CD14-positive monocyte (primary cell): ENCODE measurements at regions of chr19 and their contacts with region 1.

Region 1: DNA sequence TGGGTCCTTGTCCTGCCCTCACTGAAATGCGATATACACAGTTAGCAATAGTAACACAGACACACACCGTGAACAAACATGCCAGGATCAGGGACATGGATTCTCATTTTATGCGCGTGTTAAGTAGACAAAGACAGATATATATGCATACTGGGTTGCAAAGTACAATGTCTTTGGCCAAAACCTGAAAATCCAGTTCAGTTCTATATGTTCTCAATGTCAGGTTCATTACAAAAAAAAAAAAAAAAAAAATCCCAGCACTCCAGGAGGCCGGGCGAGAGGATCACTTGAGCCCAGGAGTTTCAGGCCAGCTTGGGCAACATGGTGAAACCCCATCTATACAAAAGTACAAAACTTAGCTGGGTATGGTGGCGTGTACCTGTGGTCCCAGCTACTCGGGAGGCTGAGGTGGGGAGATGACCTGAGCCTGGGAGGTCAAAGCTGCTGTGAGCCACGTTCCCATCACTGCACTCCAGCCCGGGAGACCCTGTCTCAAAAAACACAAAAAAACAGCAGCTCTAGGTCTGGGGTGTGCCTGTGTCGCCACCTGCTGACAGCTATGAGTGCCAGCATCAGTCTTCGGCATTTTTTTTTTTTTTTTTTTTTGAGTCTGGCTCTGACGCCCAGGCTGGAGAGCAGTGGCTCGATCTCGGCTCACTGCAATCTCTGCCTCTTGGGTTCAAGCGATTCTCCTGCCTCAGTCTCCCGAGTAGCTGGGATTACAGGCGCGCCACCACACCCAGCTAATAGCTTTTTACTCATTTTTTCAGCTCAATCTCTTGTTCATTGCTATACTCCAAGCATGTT is 10.3 kb downstream of the AP2S1 start:
- DNase-seq: peak; percentile 47 to 70 (median 61)
- H3K4me3 ChIP-seq: no peak overlapping the region
- H3K4me3 Mint-ChIP-seq: no peak overlapping the region
- H3K27ac ChIP-seq: no peak overlapping the region
- H3K27ac Mint-ChIP-seq: peak overlapping the region in 3 of 7 donors; percentile 21 to 65 (median 52)
- H3K4me1 ChIP-seq: no peaks in the 10 kb centered on the region
- H3K4me1 Mint-ChIP-seq: peaks cover 5% of the 10 kb centered on the region
- H3K27me3 ChIP-seq: no peaks in the 10 kb centered on the region
- H3K27me3 Mint-ChIP-seq: no peaks in the 10 kb centered on the region
- CTCF ChIP-seq: peak; percentile 78

Region 2: GRCh38 chr19:46753420-46754155 is 86.8 kb before region 1 on chr19:
- intact Hi-C with region 1: loop called (anchors 1 to 5 kb)
- DNase-seq: peak; percentile 38 to 57 (median 53)
- H3K4me3 ChIP-seq: no peak overlapping the region
- H3K4me3 Mint-ChIP-seq: no peak overlapping the region
- H3K27ac ChIP-seq: no peak overlapping the region
- H3K27ac Mint-ChIP-seq: no peak overlapping the region
- H3K4me1 ChIP-seq: peaks cover 18 to 22% of the 10 kb centered on the region in 2 donors
- H3K4me1 Mint-ChIP-seq: peaks cover 19% of the 10 kb centered on the region
- H3K27me3 ChIP-seq: no peaks in the 10 kb centered on the region
- H3K27me3 Mint-ChIP-seq: peaks cover 0 to 4% (median 4%) of the 10 kb centered on the region in 3 donors
- CTCF ChIP-seq: peak; percentile 68

Region 3: DNA sequence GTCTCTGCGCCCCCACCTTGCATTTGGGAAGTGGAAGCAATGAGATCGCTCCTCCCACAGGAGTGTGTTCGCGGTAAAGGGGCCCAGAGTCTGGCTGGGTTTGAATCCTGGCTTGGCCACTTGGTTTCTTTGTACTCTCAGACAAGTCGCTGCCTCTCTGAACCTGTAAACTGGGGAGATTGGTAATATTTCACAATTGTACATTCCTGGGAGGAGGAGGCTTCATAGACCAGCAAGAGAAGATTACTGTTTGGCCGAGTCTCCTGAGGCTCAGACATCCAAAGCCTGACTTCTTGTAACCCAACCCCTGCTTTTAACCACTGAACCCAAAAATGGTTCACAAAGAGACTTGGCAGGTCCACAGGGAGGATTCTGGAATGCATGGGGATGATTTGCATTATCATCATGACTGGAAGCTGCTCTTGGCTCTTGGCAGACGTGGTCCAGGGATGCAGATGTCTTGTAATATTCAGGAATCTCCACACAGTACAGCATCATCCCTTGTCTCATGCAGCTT is 80.5 kb before region 1 on chr19:
- intact Hi-C with region 1: loop called (anchors 1 to 5 kb)
- DNase-seq: no peak
- H3K4me3 ChIP-seq: no peak overlapping the region
- H3K4me3 Mint-ChIP-seq: no peak overlapping the region
- H3K27ac ChIP-seq: peak overlapping the region in 1 of 2 donors; percentile 8
- H3K27ac Mint-ChIP-seq: peak overlapping the region in 3 of 7 donors; percentile 2 to 65 (median 62)
- H3K4me1 ChIP-seq: peaks cover 24 to 31% of the 10 kb centered on the region in 2 donors
- H3K4me1 Mint-ChIP-seq: peaks cover 32% of the 10 kb centered on the region
- H3K27me3 ChIP-seq: no peaks in the 10 kb centered on the region
- H3K27me3 Mint-ChIP-seq: no peaks in the 10 kb centered on the region
- CTCF ChIP-seq: no peak

Region 4: DNA sequence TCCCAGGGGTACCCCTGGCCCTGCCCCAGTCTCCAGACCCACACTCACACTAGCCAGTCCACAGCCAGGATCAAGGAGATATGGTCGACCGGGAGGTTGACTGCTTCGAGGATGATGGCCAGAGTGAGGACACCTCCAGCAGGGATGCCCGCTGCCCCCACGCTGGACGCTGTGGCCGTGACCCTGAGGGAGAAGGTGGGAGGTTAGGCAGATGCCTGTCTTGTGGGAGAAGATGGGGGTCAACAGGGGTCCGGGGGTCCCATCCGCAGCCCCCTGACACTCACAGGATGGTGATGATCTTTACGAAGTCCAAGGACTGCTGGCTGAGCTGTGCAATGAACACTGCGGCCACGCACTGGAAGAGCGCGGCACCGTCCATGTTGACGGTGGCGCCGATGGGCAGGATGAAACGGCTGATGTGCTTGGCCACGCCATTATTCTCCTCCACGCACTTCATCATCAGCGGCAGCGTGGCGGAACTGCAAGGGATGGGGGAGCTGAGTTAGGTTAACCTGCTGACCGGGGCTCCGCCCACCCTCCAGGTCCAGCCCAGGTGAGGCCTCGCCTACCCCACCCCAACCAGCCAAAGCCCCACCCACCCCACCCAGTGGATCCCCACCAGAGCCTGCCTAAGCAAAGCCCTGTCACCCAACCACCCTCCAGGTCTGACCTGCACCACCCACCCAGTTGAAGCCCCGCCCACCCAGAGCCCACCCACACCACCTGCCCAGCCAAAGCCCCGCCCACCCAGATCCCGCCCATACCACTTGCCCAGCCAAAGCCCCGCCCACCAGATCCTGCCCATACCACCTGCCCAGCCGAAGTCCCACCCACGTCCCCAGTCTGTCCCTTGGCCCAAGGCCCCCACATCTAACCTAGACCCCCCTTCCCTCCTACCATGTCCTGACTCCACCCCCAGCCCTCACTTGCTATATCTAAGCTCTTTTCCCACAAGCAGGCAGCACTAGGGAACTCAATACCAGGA is 63.1 kb before region 1 on chr19:
- intact Hi-C with region 1: loop called in 1 of 2 experiments (anchors 5 kb)
- DNase-seq: no peak
- H3K4me3 ChIP-seq: no peak overlapping the region
- H3K4me3 Mint-ChIP-seq: peak overlapping the region in 1 of 2 donors; percentile 34
- H3K27ac ChIP-seq: peak overlapping the region in 1 of 2 donors; percentile 38
- H3K27ac Mint-ChIP-seq: peak overlapping the region in 5 of 7 donors; percentile 9 to 68 (median 57)
- H3K4me1 ChIP-seq: peaks cover 10 to 13% of the 10 kb centered on the region in 2 donors
- H3K4me1 Mint-ChIP-seq: peaks cover 16% of the 10 kb centered on the region
- H3K27me3 ChIP-seq: no peaks in the 10 kb centered on the region
- H3K27me3 Mint-ChIP-seq: peaks cover 0 to 3% (median 0%) of the 10 kb centered on the region in 3 donors
- CTCF ChIP-seq: no peak

Region 5: DNA sequence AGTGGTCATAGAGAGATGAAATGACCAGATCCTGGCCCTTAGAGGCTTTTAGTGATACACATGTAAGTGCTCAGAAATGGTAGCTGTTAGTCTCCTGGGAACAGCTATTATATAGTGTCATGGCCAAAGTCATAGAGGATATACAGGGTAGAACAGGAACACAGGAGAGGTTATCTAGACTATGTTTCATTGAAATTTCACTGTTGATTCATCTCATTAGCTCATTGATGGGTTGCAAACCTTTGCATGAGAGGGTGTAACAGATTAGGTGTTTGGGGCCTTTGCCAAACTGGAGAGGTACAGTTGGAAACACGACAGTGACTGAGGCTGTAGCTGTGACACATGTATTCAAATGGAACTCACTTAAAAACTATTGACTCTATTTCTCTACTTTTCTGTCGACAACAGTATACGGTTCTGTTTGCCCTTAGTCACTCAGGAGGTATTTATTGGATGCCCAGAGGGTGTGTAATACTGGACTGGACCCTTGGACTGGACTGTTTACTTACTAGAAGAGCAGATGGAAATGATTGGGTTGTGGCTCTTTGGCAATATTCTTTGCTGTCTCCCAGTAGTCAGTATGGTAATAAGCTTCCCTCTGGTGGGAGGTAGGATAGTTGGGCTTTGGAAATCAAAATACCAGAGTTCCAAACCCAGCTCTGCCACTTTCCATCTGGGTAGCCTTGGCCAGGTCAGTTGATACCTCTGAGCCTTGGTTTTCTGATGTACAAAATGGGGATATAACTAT is 50.3 kb after region 1 on chr19:
- intact Hi-C with region 1: no loop called
- DNase-seq: no peak
- H3K4me3 ChIP-seq: no peak overlapping the region
- H3K4me3 Mint-ChIP-seq: no peak overlapping the region
- H3K27ac ChIP-seq: no peak overlapping the region
- H3K27ac Mint-ChIP-seq: no peak overlapping the region
- H3K4me1 ChIP-seq: no peaks in the 10 kb centered on the region
- H3K4me1 Mint-ChIP-seq: peaks cover 6% of the 10 kb centered on the region
- H3K27me3 ChIP-seq: no peaks in the 10 kb centered on the region
- H3K27me3 Mint-ChIP-seq: peaks cover 0 to 2% (median 0%) of the 10 kb centered on the region in 3 donors
- CTCF ChIP-seq: no peak